ENCODE measurements at regions of chr1 and their contacts with region 1.

Region 1: DNA sequence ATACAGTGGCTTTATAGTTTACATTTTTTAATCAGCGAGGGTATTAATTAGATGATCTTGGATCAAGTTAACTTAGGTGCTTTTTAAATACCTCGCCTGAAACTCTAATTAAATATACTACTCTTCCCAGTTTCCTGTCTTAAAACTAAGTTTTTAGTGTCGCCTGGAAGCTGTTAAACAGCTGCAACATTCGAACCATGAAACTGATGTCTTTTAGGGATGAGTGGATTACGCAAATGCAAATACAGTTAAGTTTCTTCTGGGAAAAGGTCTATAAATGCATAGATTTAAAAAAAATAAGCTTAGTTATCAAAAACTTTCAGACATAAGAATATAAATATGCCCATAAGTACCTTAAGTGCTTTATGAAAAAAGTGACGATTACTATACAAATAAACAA is 228.3 kb downstream of the PTPRC start:
- DNase-seq: no peak
- ATAC-seq: no peak
- H3K4me3 ChIP-seq: no peak overlapping the region
- H3K27ac ChIP-seq: peak overlapping the region in 1 of 10 donors; percentile 3
- H3K4me1 ChIP-seq: peaks cover 0 to 30% (median 8%) of the 10 kb centered on the region in 9 donors
- H3K27me3 ChIP-seq: no peaks in the 10 kb centered on the region
- CTCF ChIP-seq: no peak

Region 2: DNA sequence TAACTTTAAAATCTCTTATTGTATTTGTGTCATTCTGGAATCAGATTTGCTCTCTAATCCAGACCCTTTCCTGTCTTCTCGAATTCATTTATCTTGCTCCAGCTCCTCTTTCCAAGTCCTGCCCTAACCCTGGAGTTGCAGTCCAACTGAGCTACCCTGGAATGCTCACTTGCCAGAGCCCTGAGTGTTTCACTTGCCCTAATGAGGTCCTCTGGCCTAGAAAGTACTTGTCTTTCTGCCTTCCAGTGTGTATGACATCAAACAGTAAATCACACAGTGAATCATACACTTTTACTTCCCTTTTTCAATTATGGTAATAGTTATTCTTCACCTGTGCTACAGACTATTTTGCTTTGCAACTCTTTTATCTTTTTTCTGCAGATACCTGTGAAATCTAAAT is 613.5 kb before region 1 on chr1:
- intact Hi-C with region 1: no loop called
- DNase-seq: no peak
- ATAC-seq: peak in 7 of 8 donors; percentile 42 to 88 (median 79)
- H3K4me3 ChIP-seq: no peak overlapping the region
- H3K27ac ChIP-seq: peak overlapping the region in 5 of 10 donors; percentile 2 to 41 (median 28)
- H3K4me1 ChIP-seq: peaks cover 0 to 40% (median 34%) of the 10 kb centered on the region in 9 donors
- H3K27me3 ChIP-seq: no peaks in the 10 kb centered on the region
- CTCF ChIP-seq: no peak

Region 3: GRCh38 chr1:198823626-198824025 is 43.6 kb before region 1 on chr1:
- intact Hi-C with region 1: no loop called
- DNase-seq: no peak
- ATAC-seq: no peak
- H3K4me3 ChIP-seq: no peak overlapping the region
- H3K27ac ChIP-seq: no peak overlapping the region
- H3K4me1 ChIP-seq: no peaks in the 10 kb centered on the region
- H3K27me3 ChIP-seq: no peaks in the 10 kb centered on the region
- CTCF ChIP-seq: no peak

Region 4: DNA sequence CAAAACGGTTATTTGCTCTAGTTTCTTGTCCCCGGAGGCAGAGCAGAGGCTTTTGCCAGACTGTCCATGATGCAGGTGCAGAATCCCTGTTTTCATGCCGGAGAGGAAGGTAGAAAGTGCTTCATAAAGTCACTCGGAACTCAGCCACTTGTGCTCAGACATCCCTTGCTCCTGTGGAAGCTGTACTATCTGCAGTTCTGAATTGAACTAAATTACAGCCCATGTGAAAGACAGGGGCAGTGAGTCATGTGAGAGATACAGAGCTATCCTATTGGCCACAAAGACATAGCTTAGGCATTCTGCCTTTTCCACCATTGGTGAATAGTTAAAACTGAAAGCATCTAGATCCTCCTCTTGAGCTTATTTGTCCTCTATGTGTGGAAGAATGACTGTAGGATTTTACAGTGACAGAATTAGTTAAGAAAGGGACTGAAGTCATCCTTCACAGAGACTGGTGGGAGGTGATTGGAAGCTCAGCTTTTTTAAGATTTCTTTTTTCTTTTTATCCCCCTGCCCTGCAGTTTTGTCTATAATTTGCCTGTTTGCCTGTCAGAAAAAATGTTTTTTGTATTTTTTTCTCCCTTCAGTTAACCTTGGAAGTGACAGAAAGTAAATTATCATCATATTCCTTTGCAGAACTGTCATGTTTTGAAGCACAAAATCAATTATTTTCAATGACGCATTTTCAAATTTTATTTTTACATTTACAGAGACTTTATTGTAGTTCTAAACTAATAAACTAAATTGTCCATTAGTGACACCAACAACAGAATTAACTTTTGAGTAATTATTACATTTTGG is 70.2 kb after region 1 on chr1:
- intact Hi-C with region 1: loop called in 2 of 10 experiments (anchors 2 to 5 kb)
- DNase-seq: peak in 1 of 2 donors; percentile 67
- ATAC-seq: peak; percentile 97 to 98 (median 97)
- H3K4me3 ChIP-seq: peak overlapping the region; percentile 24 to 80 (median 59)
- H3K27ac ChIP-seq: peak overlapping the region in 9 of 10 donors; percentile 61 to 88 (median 77)
- H3K4me1 ChIP-seq: peaks cover 2 to 42% (median 20%) of the 10 kb centered on the region in 9 donors
- H3K27me3 ChIP-seq: no peaks in the 10 kb centered on the region
- CTCF ChIP-seq: no peak